ENCODE measurements at regions of chr2 and their contacts with region 1.

Region 1: GRCh38 chr2:63078852-63079606 is 28.4 kb downstream of the OTX1 start:
- DNase-seq: peak; percentile 76
- ATAC-seq: peak; percentile 80
- H3K4me3 ChIP-seq: no peak overlapping the region
- H3K27ac ChIP-seq: no peak overlapping the region
- H3K4me1 ChIP-seq: no peaks in the 10 kb centered on the region
- H3K27me3 ChIP-seq: no peaks in the 10 kb centered on the region
- CTCF ChIP-seq: peak; percentile 83

Region 2: DNA sequence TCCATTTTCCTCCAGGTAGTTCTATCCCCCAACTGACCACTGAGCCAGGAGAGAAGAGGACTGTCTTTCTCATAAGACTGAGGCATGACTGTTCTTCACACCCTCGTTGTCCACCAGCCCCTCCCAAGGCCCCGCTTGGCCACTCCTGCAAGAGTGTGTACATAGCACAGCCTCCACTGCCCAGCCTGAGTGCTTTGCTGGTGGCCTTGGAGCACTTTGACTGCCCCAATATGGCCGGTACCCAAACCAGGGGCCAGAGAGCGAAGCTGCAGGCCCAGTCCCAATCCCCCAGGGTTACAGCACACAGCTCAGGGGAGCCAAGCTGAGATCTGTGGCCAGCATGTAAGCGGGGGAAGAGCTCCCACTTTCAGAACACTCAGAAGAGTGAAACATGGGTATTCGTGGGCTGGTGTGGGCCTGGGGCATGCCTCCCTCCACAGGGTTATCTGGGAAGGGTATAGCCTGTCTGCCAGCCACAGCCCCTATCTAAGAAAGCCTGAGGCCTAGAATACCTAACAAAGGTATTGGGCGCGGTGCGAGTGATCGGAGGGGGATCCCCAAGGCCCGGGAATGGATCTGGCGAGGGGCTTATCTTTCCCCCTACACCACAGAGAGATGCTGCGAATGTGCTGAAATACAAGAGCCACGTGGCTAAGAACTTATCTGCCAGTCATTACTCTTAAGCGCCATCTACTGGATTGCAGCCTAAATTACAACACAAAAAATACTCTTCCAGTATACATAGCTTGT is 345.5 kb after region 1 on chr2:
- CTCF ChIA-PET with region 1: interaction called, 4 read pairs
- POLR2A ChIA-PET with region 1: no interaction called
- intact Hi-C with region 1: loop called (anchors 1 kb)
- DNase-seq: peak; percentile 85
- ATAC-seq: peak; percentile 93
- H3K4me3 ChIP-seq: no peak overlapping the region
- H3K27ac ChIP-seq: no peak overlapping the region
- H3K4me1 ChIP-seq: no peaks in the 10 kb centered on the region
- H3K27me3 ChIP-seq: no peaks in the 10 kb centered on the region
- CTCF ChIP-seq: peak; percentile 86

Region 3: DNA sequence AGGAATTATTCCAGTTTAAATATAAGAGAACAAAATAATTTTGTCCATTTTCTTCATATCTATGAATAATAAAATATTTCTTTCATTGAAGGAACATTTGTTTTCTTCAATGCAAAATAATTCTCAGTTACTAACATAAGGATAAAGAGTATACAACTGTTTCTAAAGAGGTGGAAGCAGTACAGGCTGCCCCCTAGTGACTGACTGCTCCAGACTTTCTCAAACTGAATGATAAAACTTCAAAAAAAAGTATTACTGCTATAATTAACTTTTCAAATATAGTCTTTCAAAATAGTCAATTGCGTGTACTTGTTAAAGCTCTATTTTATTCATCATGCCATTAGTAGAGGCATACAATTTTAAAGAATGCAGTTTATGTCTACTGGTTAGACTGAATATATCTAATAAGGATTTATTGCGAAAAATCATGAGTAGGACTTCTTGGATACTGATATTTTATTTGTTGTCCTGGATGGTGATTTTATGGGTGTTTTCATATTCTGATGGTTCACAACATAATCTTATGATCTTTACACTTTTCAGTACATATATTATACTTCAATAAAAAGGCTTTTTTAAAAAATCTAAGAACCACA is 409.2 kb after region 1 on chr2:
- CTCF ChIA-PET with region 1: interaction called, 4 read pairs
- POLR2A ChIA-PET with region 1: no interaction called
- intact Hi-C with region 1: loop called (anchors 1 kb)
- DNase-seq: peak; percentile 51
- ATAC-seq: peak; percentile 53
- H3K4me3 ChIP-seq: no peak overlapping the region
- H3K27ac ChIP-seq: no peak overlapping the region
- H3K4me1 ChIP-seq: no peaks in the 10 kb centered on the region
- H3K27me3 ChIP-seq: no peaks in the 10 kb centered on the region
- CTCF ChIP-seq: peak; percentile 87

Measured in PC-3 (cell line).